ENCODE measurements at regions of chr18 and their contacts with region 1.

Region 1: GRCh38 chr18:45879681-45880655 is 54.5 kb downstream of the SIGLEC15 start:
- DNase-seq: peak; percentile 79
- ATAC-seq: peak; percentile 94
- H3K4me3 Mint-ChIP-seq: no peak overlapping the region
- H3K27ac Mint-ChIP-seq: no peak overlapping the region
- H3K4me1 Mint-ChIP-seq: peaks cover 17% of the 10 kb centered on the region
- H3K27me3 Mint-ChIP-seq: no peaks in the 10 kb centered on the region
- CTCF ChIP-seq: peak; percentile 100

Region 2: GRCh38 chr18:45621061-45621511 is 258.9 kb before region 1 on chr18:
- CTCF ChIA-PET with region 1: interaction called, 10 read pairs
- POLR2A ChIA-PET with region 1: no interaction called
- intact Hi-C with region 1: no loop called
- DNase-seq: peak; percentile 46
- ATAC-seq: peak; percentile 92
- H3K4me3 Mint-ChIP-seq: no peak overlapping the region
- H3K27ac Mint-ChIP-seq: no peak overlapping the region
- H3K4me1 Mint-ChIP-seq: no peaks in the 10 kb centered on the region
- H3K27me3 Mint-ChIP-seq: peaks cover 2% of the 10 kb centered on the region
- CTCF ChIP-seq: peak; percentile 78

Region 3: DNA sequence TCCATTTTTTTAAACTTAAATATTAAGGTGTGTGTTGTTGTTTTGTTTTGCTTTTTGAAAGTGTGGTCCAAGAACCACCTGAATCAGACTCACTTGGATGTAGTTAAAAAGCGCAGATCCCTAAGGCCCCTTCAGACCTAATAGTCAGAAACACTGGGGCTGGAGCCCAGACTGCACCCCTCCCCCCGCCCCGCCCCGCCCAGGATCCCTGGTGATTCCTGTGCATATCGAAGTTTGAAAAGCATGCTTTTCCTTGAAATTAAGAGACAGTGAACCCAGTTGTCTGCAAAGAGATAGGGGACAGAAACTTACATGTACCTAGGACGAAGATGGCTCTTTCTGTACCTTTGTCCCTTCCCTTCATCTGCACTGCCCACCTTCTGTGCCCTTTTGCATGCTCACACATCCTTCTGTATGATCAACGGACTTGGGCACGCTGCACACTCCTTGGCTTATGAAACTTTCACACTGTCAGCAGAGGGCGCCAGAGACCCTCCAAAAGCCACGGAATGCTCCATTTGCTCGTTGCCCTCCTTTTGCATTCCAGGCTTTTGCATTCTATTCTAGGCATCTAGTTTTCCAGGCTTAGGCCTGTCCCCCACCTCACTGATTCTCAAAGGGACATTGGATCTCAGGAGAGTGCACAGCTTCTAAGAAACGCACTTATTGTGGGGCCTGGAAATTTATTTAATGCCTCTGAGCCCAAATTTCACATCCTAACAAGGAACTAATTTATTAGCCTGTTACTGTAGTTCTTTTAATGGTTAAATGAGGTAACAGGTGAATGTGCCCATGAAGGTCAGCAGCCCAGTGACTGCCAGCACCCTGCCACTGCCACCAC is 188.8 kb before region 1 on chr18:
- CTCF ChIA-PET with region 1: interaction called, 84 read pairs
- POLR2A ChIA-PET with region 1: interaction called, 3 read pairs
- intact Hi-C with region 1: loop called (anchors 2 kb)
- DNase-seq: peak; percentile 88
- ATAC-seq: no peak
- H3K4me3 Mint-ChIP-seq: no peak overlapping the region
- H3K27ac Mint-ChIP-seq: no peak overlapping the region
- H3K4me1 Mint-ChIP-seq: peaks cover 49% of the 10 kb centered on the region
- H3K27me3 Mint-ChIP-seq: no peaks in the 10 kb centered on the region
- CTCF ChIP-seq: peak; percentile 88

Region 4: DNA sequence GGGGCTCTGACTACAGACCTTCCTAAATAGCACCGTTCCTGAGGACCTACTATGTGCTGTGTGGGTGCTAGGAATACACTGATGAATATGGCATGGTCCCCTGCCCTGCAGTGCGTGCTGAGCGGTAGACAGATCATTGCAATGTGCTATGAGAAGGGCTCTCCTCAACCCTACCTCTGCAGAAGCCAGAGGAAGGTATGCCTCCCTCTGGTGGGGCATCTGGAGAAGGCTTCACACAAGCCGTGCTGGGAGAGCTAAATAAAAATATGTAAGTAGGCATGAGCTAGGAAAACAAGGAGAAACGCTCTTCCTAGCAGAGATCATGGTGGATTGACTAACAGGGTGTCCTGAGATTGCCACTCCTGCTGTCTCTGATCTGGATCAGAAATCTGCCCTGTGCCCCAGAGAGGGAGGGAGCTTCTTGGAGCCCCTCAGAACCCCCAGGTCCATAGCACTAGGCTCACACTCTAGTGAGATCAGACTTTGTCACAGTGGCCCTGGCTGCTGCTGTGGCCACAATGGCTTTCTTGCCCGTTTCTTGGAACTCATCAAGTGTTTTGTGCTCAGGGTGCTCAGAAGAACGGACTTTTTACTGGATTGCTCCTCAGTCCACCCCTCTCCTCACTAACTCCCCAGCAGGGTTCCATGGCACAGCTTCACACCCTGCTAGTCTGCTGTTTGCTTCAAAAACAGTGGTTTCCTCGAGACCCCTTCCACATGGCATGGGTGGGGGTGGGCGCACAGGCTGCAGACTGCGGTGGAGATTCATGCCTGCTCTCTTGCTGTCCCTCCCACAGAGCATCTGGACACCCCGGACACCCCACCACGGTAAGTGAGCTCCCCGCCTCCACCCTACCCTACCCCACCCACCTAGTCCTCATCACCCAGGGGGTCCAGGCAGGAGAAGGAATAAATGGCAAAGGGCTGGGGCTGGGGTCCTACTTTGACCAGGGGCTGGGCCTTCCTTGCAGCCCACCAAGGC is 40.3 kb before region 1 on chr18:
- CTCF ChIA-PET with region 1: interaction called, 10 read pairs
- POLR2A ChIA-PET with region 1: no interaction called
- intact Hi-C with region 1: no loop called
- DNase-seq: peak; percentile 48
- ATAC-seq: peak; percentile 72
- H3K4me3 Mint-ChIP-seq: no peak overlapping the region
- H3K27ac Mint-ChIP-seq: no peak overlapping the region
- H3K4me1 Mint-ChIP-seq: peaks cover 7% of the 10 kb centered on the region
- H3K27me3 Mint-ChIP-seq: peaks cover 35% of the 10 kb centered on the region
- CTCF ChIP-seq: peak; percentile 33

Region 5: DNA sequence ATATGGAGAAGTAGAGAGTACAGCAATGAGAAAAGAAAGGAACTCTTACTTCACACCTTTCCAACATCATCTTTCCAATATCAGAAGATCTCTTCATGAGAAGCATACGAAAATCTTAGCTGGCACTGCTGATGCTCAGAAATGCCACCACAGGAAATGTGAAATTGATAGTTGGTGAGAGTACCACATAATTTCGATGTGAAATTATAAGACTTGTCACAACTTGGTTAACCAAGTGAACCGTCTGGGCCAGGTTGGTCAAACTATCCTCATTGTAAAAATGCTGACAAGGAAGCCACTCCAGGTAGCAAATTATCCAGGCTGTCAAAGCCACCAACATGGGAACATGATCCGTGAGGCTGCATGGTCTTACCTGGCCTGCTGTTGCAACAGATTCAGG is 20.7 kb after region 1 on chr18:
- CTCF ChIA-PET with region 1: interaction called, 12 read pairs
- POLR2A ChIA-PET with region 1: no interaction called
- intact Hi-C with region 1: no loop called
- DNase-seq: no peak
- ATAC-seq: no peak
- H3K4me3 Mint-ChIP-seq: no peak overlapping the region
- H3K27ac Mint-ChIP-seq: no peak overlapping the region
- H3K4me1 Mint-ChIP-seq: no peaks in the 10 kb centered on the region
- H3K27me3 Mint-ChIP-seq: no peaks in the 10 kb centered on the region
- CTCF ChIP-seq: no peak

Region 6: GRCh38 chr18:45967007-45967706 is 87.2 kb after region 1 on chr18 and contains the start of gene EPG5:
- CTCF ChIA-PET with region 1: interaction called, 4 read pairs
- POLR2A ChIA-PET with region 1: no interaction called
- intact Hi-C with region 1: loop called (anchors 10 kb)
- DNase-seq: peak; percentile 97
- ATAC-seq: peak; percentile 97
- H3K4me3 Mint-ChIP-seq: peak within 1 kb of the TSS; percentile 99
- H3K27ac Mint-ChIP-seq: peak within 1 kb of the TSS; percentile 94
- H3K4me1 Mint-ChIP-seq: peaks cover 45% of the 10 kb centered on the region
- H3K27me3 Mint-ChIP-seq: no peaks in the 10 kb centered on the region
- CTCF ChIP-seq: no peak
- total RNA-seq, gene EPG5: 15.3 to 19.0 TPM